Activated CD4-positive, alpha-beta T cell treated with anti-CD3 and anti-CD28 coated beads for 36 hours (primary cell): ENCODE measurements at regions of chr3 and their contacts with region 1.

Region 1: DNA sequence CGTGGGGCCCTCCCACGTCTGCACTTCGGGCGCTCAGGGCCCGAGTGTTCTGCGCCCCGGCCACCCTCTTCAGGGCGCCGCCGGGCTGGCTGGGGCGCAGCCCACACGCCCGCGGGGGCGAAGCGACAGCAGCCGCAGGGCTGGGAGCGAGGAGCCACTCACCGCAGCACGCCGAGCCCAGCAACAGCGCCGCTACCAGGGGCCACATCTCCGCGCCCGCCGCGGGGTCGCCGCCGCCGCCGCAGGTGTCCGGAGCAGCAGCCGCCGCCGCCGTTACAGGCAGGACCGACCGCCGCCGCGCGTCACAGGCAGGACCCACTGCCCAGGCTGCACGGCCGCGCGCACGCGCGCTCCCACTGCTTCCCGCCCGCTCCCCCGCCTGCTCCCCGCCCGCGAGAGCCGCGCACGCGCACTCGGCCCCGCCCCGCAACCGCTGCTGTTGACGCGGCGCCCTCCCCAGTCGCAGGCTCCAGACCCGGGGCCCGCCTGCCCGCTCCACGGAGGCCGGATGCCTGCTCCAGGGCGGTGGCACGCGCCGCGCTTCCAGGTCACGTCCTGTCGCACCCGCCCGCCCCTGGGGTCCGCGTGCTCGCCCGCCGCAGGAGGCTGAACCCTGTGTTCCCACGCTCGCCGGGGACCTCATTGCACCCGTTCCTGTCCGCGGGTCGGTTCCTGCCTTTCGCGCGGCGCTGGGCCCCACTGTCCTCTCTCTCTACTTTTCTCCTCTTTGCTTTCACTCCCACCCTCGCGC is at the start of gene CD47:
- DNase-seq: peak; percentile 97
- ATAC-seq: peak; percentile 63
- H3K4me3 Mint-ChIP-seq: no peak within 1 kb of the TSS
- H3K27ac Mint-ChIP-seq: peak within 1 kb of the TSS; percentile 100
- H3K4me1 Mint-ChIP-seq: peaks cover 31% of the 10 kb centered on the region
- H3K27me3 Mint-ChIP-seq: no peaks in the 10 kb centered on the region
- total RNA-seq, gene CD47: 58.6 to 104 TPM

Region 2: DNA sequence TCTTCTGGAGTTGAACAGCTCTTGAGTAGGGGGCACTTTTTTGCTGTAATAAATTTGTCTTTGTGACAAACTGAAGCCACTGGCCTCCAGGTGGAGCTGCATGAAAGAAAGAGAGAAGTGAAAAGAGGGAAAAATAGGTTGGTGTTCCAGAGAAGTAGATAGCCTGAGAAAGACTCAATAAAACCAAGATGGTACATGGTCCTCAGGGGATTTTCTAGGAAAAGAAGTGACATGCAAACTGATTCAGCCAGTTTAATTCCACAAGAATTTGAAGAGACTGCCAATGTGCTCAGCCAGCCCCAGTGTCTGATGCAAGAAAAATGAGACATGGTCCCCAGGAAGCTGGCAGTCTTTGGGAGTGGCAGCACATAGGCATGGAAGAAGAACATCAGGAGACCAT is 152.7 kb before region 1 on chr3:
- CTCF ChIA-PET with region 1: no interaction called
- POLR2A ChIA-PET with region 1: no interaction called
- intact Hi-C with region 1: loop called (anchors 1 to 5 kb)
- DNase-seq: peak; percentile 17
- ATAC-seq: no peak
- H3K4me3 Mint-ChIP-seq: no peak overlapping the region
- H3K27ac Mint-ChIP-seq: no peak overlapping the region
- H3K4me1 Mint-ChIP-seq: peaks cover 22% of the 10 kb centered on the region
- H3K27me3 Mint-ChIP-seq: peaks cover 5% of the 10 kb centered on the region

Region 3: DNA sequence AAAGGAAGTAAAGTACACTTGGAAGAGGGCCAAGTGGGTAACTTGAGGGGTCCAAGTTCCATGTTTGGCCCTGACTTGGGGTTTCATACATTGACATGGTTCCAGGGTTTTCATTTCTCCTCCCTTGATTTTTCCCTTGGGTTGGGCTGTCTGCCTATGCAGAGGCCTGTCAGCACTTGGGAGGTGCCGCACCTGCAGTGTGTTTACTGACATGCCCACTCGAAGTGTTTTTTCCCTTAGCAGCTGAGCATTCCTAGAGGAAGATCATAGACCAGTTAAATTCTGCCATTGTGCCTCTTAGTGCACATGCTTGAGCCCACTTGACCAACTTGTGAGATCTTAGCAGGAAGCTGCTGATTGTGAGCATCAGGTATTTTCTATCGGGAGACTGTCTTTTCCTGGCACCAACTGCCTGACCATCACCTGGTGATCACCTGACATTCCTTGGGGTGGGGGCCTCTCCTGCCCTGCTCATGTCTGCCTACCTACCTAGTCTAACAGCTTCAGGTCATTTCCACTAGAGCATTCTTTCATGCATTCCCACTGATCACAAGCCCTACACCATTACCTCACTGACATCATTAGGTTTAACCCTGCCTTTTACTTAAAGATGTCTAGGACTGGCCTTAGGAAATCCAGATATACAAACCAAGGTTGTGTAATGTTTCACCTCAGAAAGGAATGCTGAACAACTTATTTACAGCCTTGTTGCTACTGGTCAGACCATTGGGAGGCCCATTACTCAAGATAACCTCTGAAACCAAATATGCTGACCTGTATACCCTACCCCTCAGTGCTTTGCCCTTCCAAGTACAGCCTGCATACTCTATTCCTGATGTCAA is 68.4 kb before region 1 on chr3:
- CTCF ChIA-PET with region 1: no interaction called
- POLR2A ChIA-PET with region 1: no interaction called
- intact Hi-C with region 1: no loop called
- DNase-seq: no peak
- ATAC-seq: no peak
- H3K4me3 Mint-ChIP-seq: no peak overlapping the region
- H3K27ac Mint-ChIP-seq: no peak overlapping the region
- H3K4me1 Mint-ChIP-seq: peaks cover 2% of the 10 kb centered on the region
- H3K27me3 Mint-ChIP-seq: peaks cover 3% of the 10 kb centered on the region

Region 4: GRCh38 chr3:108100906-108101660 is 10.2 kb after region 1 on chr3:
- CTCF ChIA-PET with region 1: interaction called, 4 read pairs
- POLR2A ChIA-PET with region 1: interaction called, 3 read pairs
- intact Hi-C with region 1: loop called (anchors 1 kb)
- DNase-seq: peak; percentile 59
- ATAC-seq: peak; percentile 89
- H3K4me3 Mint-ChIP-seq: no peak overlapping the region
- H3K27ac Mint-ChIP-seq: peak overlapping the region; percentile 55
- H3K4me1 Mint-ChIP-seq: peaks cover 48% of the 10 kb centered on the region
- H3K27me3 Mint-ChIP-seq: no peaks in the 10 kb centered on the region

Region 5: GRCh38 chr3:108202837-108203236 is 112.0 kb after region 1 on chr3:
- CTCF ChIA-PET with region 1: no interaction called
- POLR2A ChIA-PET with region 1: no interaction called
- intact Hi-C with region 1: no loop called
- DNase-seq: peak; percentile 7
- ATAC-seq: no peak
- H3K4me3 Mint-ChIP-seq: no peak overlapping the region
- H3K27ac Mint-ChIP-seq: no peak overlapping the region
- H3K4me1 Mint-ChIP-seq: peaks cover 32% of the 10 kb centered on the region
- H3K27me3 Mint-ChIP-seq: no peaks in the 10 kb centered on the region

Region 6: DNA sequence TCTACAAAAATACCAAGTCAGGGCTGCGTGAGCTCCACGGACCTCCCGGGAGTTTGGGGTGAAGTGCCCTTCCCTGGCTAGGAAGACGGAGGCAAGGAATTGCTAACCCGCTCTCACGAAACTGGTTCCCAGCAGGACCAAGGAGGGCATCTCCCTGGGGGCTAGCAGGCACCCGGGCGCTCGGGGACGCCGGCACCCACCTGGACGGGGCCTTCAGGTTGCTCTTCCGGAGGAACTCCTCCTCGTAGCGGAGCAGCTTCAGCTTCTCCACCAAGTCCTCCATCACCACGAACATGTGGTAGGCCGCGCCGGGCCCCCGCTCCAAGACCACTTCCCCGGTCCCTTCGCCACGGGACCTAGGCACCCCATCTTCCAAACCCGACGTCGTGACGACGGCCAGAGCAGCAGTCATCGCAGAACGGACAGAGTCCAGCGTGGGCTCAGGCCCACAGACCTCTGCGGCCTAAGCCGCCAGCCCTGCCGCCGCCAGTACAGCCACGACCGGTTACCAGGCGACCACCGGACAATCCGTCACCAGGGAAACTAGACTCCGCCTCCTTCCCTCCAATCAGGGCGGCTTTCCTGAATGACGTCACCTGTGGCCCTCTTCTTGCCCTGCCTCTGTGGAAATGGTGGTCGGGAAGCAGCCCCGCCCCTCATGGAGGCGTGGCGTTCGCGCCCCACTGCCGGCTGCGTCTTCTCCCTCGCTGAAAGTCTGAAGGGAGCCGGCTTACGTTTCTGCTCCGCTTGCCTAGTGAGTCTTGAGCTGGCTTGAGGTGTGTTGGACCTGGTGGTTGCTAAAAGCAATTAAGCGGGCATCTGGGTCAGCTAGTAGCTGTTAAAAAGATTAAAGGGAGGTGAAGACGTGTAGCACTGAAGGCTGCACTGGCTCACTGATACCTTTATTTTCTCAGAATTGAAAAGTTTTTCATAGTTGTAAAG is 131.3 kb after region 1 on chr3 and contains the start of gene IFT57:
- CTCF ChIA-PET with region 1: no interaction called
- POLR2A ChIA-PET with region 1: no interaction called
- intact Hi-C with region 1: loop called (anchors 1 kb)
- DNase-seq: peak; percentile 96
- ATAC-seq: peak; percentile 92
- H3K4me3 Mint-ChIP-seq: peak within 1 kb of the TSS; percentile 99
- H3K27ac Mint-ChIP-seq: peak within 1 kb of the TSS; percentile 99
- H3K4me1 Mint-ChIP-seq: peaks cover 47% of the 10 kb centered on the region
- H3K27me3 Mint-ChIP-seq: no peaks in the 10 kb centered on the region
- total RNA-seq, gene IFT57: 27.9 to 29.6 TPM

Region 7: GRCh38 chr3:108589146-108589997 is 498.5 kb after region 1 on chr3 and contains the starts of genes CIP2A and DZIP3:
- CTCF ChIA-PET with region 1: no interaction called
- POLR2A ChIA-PET with region 1: interaction called, 3 read pairs
- intact Hi-C with region 1: loop called in 1 of 2 experiments (anchors 1 kb)
- DNase-seq: peak; percentile 90
- ATAC-seq: peak; percentile 87
- H3K4me3 Mint-ChIP-seq: peak within 1 kb of the TSS; percentile 82
- H3K27ac Mint-ChIP-seq: peak within 1 kb of the TSS; percentile 97
- H3K4me1 Mint-ChIP-seq: peaks cover 33% of the 10 kb centered on the region
- H3K27me3 Mint-ChIP-seq: no peaks in the 10 kb centered on the region
- total RNA-seq, gene CIP2A: 47.8 to 58.5 TPM
- total RNA-seq, gene DZIP3: 11.9 to 12.9 TPM